ENCODE measurements at regions of chr5 and their contacts with region 1.

Region 1: GRCh38 chr5:31573494-31574142 is 41.5 kb downstream of the C5orf22 start:
- DNase-seq: peak; percentile 58
- CTCF ChIP-seq: no peak

Region 2: GRCh38 chr5:31285025-31285424 is 288.6 kb before region 1 on chr5:
- in situ Hi-C with region 1: no loop called
- DNase-seq: no peak
- CTCF ChIP-seq: no peak

Region 3: DNA sequence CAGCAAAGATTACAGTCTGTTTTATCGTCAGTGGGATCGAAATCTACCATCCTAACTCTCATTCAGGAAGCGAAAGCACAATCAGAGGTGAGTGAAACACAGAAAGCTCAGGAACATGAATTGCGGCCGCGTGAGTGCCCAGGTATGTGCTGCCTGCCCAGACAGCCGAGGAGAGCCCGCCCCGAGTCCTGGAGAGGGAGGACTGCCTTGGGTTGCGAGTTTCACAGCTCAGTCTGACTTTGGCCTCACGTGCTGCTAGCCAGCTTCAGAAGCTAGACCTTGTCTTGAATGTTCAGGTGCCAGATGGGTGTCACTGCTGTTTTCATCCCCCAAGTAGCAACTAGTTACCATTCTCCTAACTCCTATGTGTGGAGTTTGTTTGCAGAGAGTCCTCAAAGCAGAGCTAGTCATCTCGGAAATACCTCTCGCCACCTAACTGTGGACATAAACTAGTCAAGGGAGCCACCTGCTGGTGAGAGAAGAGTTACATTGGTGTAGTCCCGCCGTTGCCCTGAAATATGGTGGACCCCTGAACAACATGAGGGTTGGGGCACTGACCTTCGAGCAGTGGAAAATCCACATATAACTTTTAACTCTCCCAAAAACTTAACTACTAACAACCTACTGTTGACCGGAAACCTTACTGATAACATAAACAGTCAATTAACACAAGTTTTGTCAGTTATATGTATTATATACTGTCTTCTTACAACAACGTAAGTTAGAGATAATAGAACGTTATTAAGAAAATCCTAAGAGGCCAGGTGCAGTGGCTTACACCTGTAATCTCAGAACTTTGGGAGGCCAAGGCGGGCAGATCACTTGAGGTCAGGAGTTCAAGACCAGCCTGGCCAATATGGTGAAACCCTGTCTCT is 519.6 kb after region 1 on chr5:
- in situ Hi-C with region 1: loop called (anchors 10 kb)
- DNase-seq: peak; percentile 87
- CTCF ChIP-seq: peak; percentile 75

Measured in GM13976 (cell line).